Naive thymus-derived CD4-positive, alpha-beta T cell (primary cell): ENCODE measurements at regions of chr4 and their contacts with region 1.

Region 1: GRCh38 chr4:2220016-2220630 is 21.8 kb downstream of the HAUS3 start:
- DNase-seq: peak; percentile 61 to 84 (median 76)
- ATAC-seq: peak; percentile 96
- H3K4me3 ChIP-seq: no peak overlapping the region
- H3K4me3 Mint-ChIP-seq: no peak overlapping the region
- H3K27ac ChIP-seq: no peak overlapping the region
- H3K27ac Mint-ChIP-seq: peak overlapping the region in 2 of 9 donors; percentile 6 to 29
- H3K4me1 ChIP-seq: peaks cover 0 to 7% of the 10 kb centered on the region in 2 donors
- H3K4me1 Mint-ChIP-seq: peaks cover 0 to 17% (median 6%) of the 10 kb centered on the region in 7 donors
- H3K27me3 ChIP-seq: no peaks in the 10 kb centered on the region
- H3K27me3 Mint-ChIP-seq: no peaks in the 10 kb centered on the region

Region 2: DNA sequence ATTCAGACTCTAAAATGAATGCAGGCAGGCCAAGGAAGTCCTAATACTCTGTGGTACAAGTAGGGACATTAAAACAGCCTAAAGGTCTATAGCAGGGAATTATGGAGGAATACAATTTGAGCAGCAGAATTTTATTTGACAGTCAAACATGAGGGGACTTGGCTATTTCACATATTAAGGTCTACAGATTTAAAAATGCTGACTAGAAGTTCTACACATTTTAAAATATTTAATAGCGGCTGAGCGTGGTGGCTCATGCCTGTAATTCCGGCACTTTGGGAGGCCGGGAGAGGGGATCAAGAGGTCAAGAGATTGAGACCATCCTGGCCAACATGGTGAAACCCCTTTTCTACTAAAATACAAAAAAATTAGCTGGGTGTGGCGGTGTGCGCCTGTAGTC is 11.0 kb after region 1 on chr4:
- CTCF ChIA-PET with region 1: interaction called, 18 read pairs
- POLR2A ChIA-PET with region 1: no interaction called
- intact Hi-C with region 1: no loop called
- DNase-seq: no peak
- ATAC-seq: no peak
- H3K4me3 ChIP-seq: no peak overlapping the region
- H3K4me3 Mint-ChIP-seq: no peak overlapping the region
- H3K27ac ChIP-seq: no peak overlapping the region
- H3K27ac Mint-ChIP-seq: no peak overlapping the region
- H3K4me1 ChIP-seq: no peaks in the 10 kb centered on the region
- H3K4me1 Mint-ChIP-seq: peaks cover 12 to 43% (median 32%) of the 10 kb centered on the region in 7 donors
- H3K27me3 ChIP-seq: no peaks in the 10 kb centered on the region
- H3K27me3 Mint-ChIP-seq: no peaks in the 10 kb centered on the region

Region 3: DNA sequence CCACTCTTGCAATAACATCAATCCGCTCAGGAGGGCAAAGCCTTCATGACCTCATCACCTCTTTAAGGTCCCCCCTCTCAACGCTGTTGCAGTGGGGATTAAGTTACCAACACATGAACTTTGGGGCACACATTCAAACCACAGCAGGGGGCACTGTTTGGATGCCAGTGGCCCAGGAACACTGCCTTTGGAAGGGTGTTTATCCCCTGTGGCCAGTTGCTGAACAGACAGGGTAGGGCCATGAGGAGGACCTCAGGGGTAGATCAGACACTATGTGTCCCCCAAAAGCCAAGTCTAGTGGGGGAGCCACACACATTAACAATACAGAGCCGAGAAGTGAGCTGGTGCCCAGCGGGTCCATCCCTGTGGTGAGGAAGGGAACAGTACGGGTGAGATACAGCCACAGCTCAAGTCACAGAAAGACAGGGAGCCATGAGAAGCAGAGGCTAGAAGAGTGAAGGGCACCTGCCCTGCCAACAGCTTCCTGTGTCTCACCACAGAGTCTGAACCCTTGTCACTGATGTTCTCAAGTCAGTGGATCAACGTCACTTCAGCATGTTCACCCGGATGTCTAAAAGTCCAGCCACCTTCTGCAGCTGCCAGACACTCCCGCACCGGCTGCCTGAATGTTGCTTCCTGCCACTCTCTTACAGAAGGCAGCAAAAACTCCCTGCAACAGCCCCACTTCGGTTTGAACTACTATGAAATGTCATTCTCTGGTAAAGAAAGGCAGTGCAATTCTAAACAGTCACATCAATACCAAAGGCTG is 61.6 kb after region 1 on chr4:
- CTCF ChIA-PET with region 1: interaction called, 5 read pairs
- POLR2A ChIA-PET with region 1: no interaction called
- intact Hi-C with region 1: loop called in 1 of 2 experiments (anchors 1 kb)
- DNase-seq: peak; percentile 51 to 96 (median 94)
- ATAC-seq: peak; percentile 95
- H3K4me3 ChIP-seq: peak overlapping the region; percentile 33
- H3K4me3 Mint-ChIP-seq: peak overlapping the region; percentile 73 to 90 (median 84)
- H3K27ac ChIP-seq: peak overlapping the region; percentile 81
- H3K27ac Mint-ChIP-seq: peak overlapping the region; percentile 91 to 100 (median 99)
- H3K4me1 ChIP-seq: peaks cover 31 to 34% of the 10 kb centered on the region in 2 donors
- H3K4me1 Mint-ChIP-seq: peaks cover 27 to 64% (median 50%) of the 10 kb centered on the region in 7 donors
- H3K27me3 ChIP-seq: no peaks in the 10 kb centered on the region
- H3K27me3 Mint-ChIP-seq: no peaks in the 10 kb centered on the region

Region 4: GRCh38 chr4:2354118-2354517 is 134.0 kb after region 1 on chr4:
- CTCF ChIA-PET with region 1: interaction called, 7 read pairs
- POLR2A ChIA-PET with region 1: no interaction called
- intact Hi-C with region 1: loop called (anchors 1 kb)
- DNase-seq: peak in 5 of 9 donors; percentile 25 to 51 (median 44)
- ATAC-seq: peak; percentile 61
- H3K4me3 ChIP-seq: no peak overlapping the region
- H3K4me3 Mint-ChIP-seq: no peak overlapping the region
- H3K27ac ChIP-seq: no peak overlapping the region
- H3K27ac Mint-ChIP-seq: no peak overlapping the region
- H3K4me1 ChIP-seq: no peaks in the 10 kb centered on the region
- H3K4me1 Mint-ChIP-seq: peaks cover 0 to 11% (median 6%) of the 10 kb centered on the region in 7 donors
- H3K27me3 ChIP-seq: no peaks in the 10 kb centered on the region
- H3K27me3 Mint-ChIP-seq: no peaks in the 10 kb centered on the region

Region 5: DNA sequence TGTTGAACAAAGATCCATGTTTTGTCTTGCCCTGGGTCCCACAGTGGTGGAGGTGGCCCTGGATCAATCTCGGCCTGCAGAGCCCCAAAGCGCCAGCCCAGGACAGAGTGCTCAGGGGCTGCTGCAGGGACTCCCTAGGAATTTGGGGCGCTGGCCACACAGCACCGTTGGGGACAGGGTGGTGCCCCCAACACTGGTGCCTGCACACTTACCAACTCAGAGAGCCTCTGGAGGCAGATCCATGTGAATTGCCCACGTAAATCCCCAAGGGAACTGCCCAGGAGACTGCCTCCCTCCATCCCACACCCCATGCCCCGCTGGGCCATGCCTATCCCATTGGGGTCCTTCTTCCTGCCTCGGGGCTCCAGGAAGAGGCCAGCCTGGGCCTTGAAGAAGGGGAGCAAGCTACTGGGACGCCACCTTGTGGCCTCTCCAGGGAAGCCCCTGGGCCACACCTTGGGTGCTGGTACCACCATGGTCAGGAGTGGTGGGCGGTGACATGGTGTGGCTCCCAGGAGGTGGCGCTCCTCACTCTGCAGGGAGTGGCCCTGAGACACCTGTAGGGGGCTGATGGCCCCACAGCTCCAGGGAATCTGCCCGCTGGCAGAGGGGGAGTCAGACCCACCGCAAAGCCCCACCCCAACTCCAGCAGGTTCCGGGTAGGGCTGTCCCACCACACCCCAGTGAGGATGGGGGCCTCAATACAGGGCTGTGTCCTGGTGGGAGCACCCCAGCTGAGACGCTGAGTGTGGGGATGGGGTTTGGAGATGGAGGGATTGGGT is 221.5 kb after region 1 on chr4:
- CTCF ChIA-PET with region 1: interaction called, 6 read pairs
- POLR2A ChIA-PET with region 1: no interaction called
- intact Hi-C with region 1: loop called (anchors 1 kb)
- DNase-seq: peak; percentile 41 to 69 (median 57)
- ATAC-seq: peak; percentile 96
- H3K4me3 ChIP-seq: no peak overlapping the region
- H3K4me3 Mint-ChIP-seq: no peak overlapping the region
- H3K27ac ChIP-seq: no peak overlapping the region
- H3K27ac Mint-ChIP-seq: peak overlapping the region in 2 of 9 donors; percentile 4 to 20
- H3K4me1 ChIP-seq: peaks cover 0 to 4% of the 10 kb centered on the region in 2 donors
- H3K4me1 Mint-ChIP-seq: peaks cover 0 to 5% (median 3%) of the 10 kb centered on the region in 7 donors
- H3K27me3 ChIP-seq: no peaks in the 10 kb centered on the region
- H3K27me3 Mint-ChIP-seq: no peaks in the 10 kb centered on the region

Region 6: GRCh38 chr4:2462218-2462991 is 242.3 kb after region 1 on chr4:
- CTCF ChIA-PET with region 1: interaction called, 12 read pairs
- POLR2A ChIA-PET with region 1: interaction called, 3 read pairs
- intact Hi-C with region 1: loop called (anchors 1 kb)
- DNase-seq: peak; percentile 42 to 76 (median 66)
- ATAC-seq: peak; percentile 97
- H3K4me3 ChIP-seq: peak overlapping the region; percentile 44
- H3K4me3 Mint-ChIP-seq: peak overlapping the region; percentile 65 to 87 (median 81)
- H3K27ac ChIP-seq: peak overlapping the region; percentile 41
- H3K27ac Mint-ChIP-seq: peak overlapping the region in 2 of 9 donors; percentile 14 to 45
- H3K4me1 ChIP-seq: peaks cover 0 to 5% of the 10 kb centered on the region in 2 donors
- H3K4me1 Mint-ChIP-seq: peaks cover 6 to 21% (median 16%) of the 10 kb centered on the region in 7 donors
- H3K27me3 ChIP-seq: no peaks in the 10 kb centered on the region
- H3K27me3 Mint-ChIP-seq: peaks cover 0 to 38% (median 7%) of the 10 kb centered on the region in 5 donors